ENCODE measurements at regions of chr3 and their contacts with region 1.

Region 1: DNA sequence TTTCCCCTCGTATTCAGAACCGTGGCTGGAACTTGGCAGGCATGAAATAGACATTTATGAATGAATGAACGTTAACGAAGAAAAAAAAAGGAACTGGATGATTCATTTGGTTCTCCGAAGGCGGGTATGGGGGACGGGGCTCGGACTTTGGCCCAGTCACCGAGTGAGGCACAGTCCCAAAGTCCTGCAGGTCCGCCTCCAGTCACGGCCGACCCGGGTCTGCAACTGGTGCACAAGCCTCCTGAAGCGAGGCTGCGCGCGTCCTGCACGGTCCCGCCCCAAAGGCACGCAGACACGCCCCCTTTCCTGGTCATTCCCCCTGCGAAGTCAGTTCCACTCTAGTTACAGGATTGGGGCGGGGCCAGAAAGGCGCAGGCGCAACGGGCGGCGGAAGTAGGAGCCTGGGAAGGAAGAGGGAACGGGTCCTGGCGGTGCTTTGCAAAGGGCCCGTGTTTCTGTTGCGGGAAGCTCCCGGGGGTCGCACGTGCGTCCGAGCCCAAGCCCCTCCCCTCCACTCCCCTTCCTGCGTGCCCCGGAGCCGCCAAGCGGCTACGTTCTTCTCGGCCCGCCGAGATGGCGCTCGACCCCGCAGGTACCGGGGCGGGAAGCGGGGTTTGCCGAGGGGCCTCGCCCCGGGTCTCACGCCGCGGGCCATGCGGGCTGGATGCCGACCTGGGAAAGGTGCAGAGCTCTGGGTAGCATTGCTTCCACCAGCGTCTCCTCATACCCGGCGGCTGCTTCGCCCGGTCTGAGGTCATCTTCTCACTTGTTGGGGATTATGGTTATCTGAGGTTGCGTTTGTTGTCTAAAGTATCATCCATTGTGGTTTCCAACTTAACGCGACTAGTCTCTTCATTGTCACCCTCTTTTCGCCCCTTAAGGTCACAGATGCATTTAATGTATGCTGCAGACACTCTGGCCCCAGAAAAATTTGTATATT is at the start of gene CMC1:
- DNase-seq: peak; percentile 98 to 99 (median 99)
- ATAC-seq: peak; percentile 100
- H3K4me3 ChIP-seq: peak within 1 kb of the TSS; percentile 51 to 99 (median 88)
- H3K27ac ChIP-seq: peak within 1 kb of the TSS in 11 of 12 donors; percentile 71 to 94 (median 85)
- H3K4me1 ChIP-seq: peaks cover 0 to 46% (median 11%) of the 10 kb centered on the region in 12 donors
- H3K27me3 ChIP-seq: no peaks in the 10 kb centered on the region
- CTCF ChIP-seq: peak in 2 of 12 donors; percentile 6
- POLR2A ChIP-seq: peak in 1 of 2 donors; percentile 95
- total RNA-seq, gene CMC1: 14.9 to 44.1 (median 23.3) TPM

Region 2: DNA sequence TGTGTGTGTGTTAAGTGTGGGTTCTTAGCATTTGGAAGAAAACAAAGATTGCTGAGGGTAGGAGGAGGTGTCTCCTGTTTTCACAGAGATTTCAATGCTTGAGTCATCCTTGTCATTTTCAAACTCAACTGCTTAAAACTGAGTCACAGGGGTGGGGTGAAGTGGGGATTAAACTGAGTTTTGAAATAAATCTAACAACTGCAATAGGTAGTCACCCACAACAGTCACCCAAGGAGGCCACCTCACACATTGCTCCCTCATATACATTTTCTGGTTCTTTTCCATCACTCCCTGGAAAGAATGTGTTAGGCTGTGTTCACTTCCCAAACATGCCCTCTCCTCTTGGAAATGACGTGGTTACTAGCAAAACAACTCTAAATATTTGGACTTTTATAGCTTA is 187.7 kb before region 1 on chr3:
- intact Hi-C with region 1: no loop called
- DNase-seq: no peak
- ATAC-seq: no peak
- H3K4me3 ChIP-seq: no peak overlapping the region
- H3K27ac ChIP-seq: no peak overlapping the region
- H3K4me1 ChIP-seq: no peaks in the 10 kb centered on the region
- H3K27me3 ChIP-seq: peaks cover 0 to 9% (median 0%) of the 10 kb centered on the region in 9 donors
- CTCF ChIP-seq: no peak
- POLR2A ChIP-seq: no peak

Region 3: DNA sequence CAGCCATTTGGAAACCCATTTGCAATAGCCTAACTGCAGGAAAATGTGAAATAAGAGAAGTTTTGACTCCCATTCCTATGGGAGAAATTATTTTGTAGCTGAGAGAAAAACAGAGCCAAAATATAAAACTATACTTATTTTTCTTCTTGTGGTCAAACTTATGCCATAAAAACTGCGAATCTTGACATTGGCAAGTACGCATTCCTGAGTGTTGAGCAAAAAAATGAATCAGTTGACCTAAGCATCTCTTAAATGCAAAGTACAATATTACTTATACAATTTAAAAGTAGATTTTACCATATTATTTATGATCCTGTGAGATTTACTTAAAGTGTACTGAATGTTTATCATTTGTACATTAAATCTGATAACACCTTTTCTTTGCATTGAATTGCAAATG is 50.1 kb before region 1 on chr3:
- intact Hi-C with region 1: no loop called
- DNase-seq: no peak
- ATAC-seq: no peak
- H3K4me3 ChIP-seq: no peak overlapping the region
- H3K27ac ChIP-seq: no peak overlapping the region
- H3K4me1 ChIP-seq: no peaks in the 10 kb centered on the region
- H3K27me3 ChIP-seq: no peaks in the 10 kb centered on the region
- CTCF ChIP-seq: no peak
- POLR2A ChIP-seq: no peak

Region 4: GRCh38 chr3:28286595-28286994 is 45.1 kb after region 1 on chr3:
- intact Hi-C with region 1: loop called in 1 of 10 experiments (anchors 5 kb)
- DNase-seq: no peak
- ATAC-seq: peak in 3 of 4 donors; percentile 72 to 82 (median 82)
- H3K4me3 ChIP-seq: no peak overlapping the region
- H3K27ac ChIP-seq: no peak overlapping the region
- H3K4me1 ChIP-seq: peaks cover 0 to 6% (median 0%) of the 10 kb centered on the region in 12 donors
- H3K27me3 ChIP-seq: no peaks in the 10 kb centered on the region
- CTCF ChIP-seq: peak; percentile 34 to 64 (median 53)
- POLR2A ChIP-seq: no peak

Region 5: DNA sequence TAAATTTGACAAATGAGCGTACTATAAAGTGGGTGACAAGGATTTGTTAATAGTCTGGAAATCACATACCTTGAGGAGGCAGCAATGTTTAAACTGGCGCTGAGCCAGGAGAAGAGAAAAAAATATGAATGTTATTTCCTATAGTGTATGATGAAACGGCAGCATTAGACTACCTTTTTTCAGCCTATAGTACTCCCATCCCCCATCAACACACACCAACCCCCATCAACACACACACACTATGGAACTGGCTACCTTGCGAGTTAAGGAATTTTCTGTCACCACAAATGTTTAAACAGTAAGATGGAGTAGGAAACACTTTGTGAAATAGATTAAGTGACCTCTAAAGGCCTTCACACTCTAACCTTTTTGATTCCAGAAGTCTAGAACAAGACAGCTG is 60.2 kb after region 1 on chr3:
- intact Hi-C with region 1: loop called in 1 of 10 experiments (anchors 2 kb)
- DNase-seq: no peak
- ATAC-seq: no peak
- H3K4me3 ChIP-seq: no peak overlapping the region
- H3K27ac ChIP-seq: no peak overlapping the region
- H3K4me1 ChIP-seq: no peaks in the 10 kb centered on the region
- H3K27me3 ChIP-seq: no peaks in the 10 kb centered on the region
- CTCF ChIP-seq: no peak
- POLR2A ChIP-seq: no peak

Region 6: DNA sequence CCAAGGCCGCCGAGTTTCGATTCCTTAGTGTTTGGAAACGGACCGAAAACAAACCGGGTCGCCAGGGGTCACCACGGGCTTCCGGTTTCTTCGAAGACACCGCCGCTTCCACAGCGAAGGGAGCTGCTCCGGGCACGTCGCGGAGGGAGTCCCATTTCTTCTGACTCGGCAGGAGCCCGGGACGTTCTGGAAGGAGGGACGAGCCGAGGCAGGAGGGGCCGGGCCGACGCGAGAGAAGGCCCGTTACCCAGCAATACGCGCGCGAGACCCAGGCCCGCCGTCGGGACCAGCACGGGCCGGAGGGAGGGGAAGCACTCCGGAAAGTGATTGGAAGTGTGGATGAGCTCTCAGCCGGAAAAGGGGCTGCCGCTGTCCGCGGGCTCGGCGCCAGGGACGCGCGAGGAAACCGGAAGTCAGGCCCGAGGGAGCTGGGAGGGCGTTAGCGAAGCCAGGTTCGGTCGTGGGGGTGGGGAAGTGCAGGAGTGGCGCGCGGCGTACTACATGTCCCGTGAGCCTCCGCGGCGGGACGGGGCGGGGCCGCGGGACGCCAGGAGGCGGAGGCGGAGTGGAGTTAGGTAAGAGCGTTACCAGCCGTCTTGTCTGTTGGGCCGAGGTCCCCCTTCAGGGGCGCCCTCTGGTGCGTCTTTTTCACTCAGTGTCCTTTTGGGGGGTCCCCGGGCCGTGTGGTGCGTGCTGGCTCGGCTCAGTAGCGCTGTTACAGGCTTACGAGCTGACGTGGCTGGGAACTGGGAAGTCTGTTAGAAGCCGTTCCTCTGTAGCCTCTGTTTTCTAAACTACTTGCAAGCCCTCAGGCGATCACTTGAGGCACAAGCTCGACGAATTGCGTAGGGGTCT is 107.4 kb after region 1 on chr3 and contains the starts of genes AZI2 and ZCWPW2:
- intact Hi-C with region 1: loop called in 2 of 10 experiments (anchors 5 to 10 kb)
- DNase-seq: peak; percentile 96 to 97 (median 97)
- ATAC-seq: peak; percentile 95 to 99 (median 98)
- H3K4me3 ChIP-seq: peak within 1 kb of the TSS; percentile 59 to 89 (median 80)
- H3K27ac ChIP-seq: peak within 1 kb of the TSS; percentile 97 to 100 (median 98)
- H3K4me1 ChIP-seq: peaks cover 0 to 62% (median 46%) of the 10 kb centered on the region in 12 donors
- H3K27me3 ChIP-seq: no peaks in the 10 kb centered on the region
- CTCF ChIP-seq: peak in 5 of 12 donors; percentile 13 to 42 (median 32)
- POLR2A ChIP-seq: peak in 1 of 2 donors; percentile 79
- total RNA-seq, gene AZI2: 21.4 to 48.1 (median 33.2) TPM
- total RNA-seq, gene ZCWPW2: 0.94 to 4.9 (median 1.8) TPM

Region 7: DNA sequence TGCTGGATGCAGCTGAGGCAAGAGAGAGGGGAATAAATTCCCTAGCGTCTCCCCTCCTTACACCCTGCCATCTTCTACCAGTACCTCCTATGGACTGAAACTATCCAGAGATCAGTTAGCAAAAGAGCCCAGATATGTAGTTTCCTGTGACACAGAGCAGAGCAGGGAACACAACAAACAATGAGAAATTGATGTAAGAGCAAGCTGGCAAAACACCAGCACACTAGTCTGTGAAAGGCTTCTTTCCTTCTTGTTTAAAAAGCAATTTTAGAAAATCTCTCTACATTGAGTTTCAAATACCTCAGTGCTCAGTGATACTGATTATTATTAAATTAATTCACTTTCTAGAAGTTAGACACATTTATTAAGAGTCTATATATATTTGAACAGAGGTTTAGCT is 322.7 kb after region 1 on chr3:
- intact Hi-C with region 1: no loop called
- DNase-seq: no peak
- ATAC-seq: no peak
- H3K4me3 ChIP-seq: no peak overlapping the region
- H3K27ac ChIP-seq: no peak overlapping the region
- H3K4me1 ChIP-seq: no peaks in the 10 kb centered on the region
- H3K27me3 ChIP-seq: no peaks in the 10 kb centered on the region
- CTCF ChIP-seq: no peak
- POLR2A ChIP-seq: no peak

Measured in heart left ventricle (tissue), 16 donors.